ENCODE measurements at regions of chr4 and their contacts with region 1.

Region 1: DNA sequence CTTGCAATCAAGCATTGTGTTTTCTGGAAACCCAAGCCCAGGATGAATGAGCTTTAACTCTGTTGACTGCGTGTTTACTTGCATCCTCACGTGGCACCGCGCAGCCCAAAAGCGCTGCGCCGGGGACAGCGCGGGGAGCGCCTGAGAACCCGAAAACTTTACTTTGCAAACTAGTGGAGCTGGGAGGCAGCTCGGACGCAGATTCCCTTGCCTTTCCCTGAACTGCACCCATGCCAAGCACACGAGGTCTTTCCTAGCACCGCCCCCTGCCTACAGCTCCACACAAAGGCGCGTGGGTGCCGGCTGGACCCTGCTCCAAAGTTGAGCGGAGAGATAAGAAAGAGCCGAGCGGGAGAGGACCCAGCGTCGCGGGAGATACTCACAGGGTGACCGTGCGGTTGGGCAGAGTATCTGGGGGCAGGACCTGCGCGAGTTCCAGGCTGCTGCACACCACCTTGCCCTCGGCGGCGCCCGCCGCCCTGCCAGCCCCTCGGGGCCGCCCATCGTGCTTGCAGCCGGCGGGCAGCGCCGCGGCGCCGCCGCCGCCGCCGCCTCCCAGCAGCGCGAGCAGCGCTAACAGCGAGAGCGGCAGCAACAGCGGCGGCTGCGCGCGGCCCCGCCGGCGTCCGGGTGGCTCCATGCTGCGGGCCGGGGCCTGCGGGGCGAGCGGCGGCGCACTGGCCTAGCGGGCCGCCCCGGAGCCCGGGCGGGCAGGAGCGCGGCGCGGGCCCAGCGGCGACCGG is 550 bp downstream of the ADGRA3 start:
- DNase-seq: peak; percentile 32 to 33
- ATAC-seq: peak; percentile 71 to 83 (median 74)
- H3K4me3 ChIP-seq: peak overlapping the region; percentile 48
- H3K4me3 Mint-ChIP-seq: peak overlapping the region; percentile 99
- H3K27ac ChIP-seq: no peak overlapping the region
- H3K27ac Mint-ChIP-seq: peak overlapping the region; percentile 58 to 85
- H3K4me1 ChIP-seq: peaks cover 10% of the 10 kb centered on the region
- H3K4me1 Mint-ChIP-seq: peaks cover 26 to 29% of the 10 kb centered on the region in 2 donors
- H3K27me3 ChIP-seq: peaks cover 2% of the 10 kb centered on the region
- H3K27me3 Mint-ChIP-seq: peaks cover 0 to 6% of the 10 kb centered on the region in 2 donors
- CTCF ChIP-seq: no peak

Region 2: DNA sequence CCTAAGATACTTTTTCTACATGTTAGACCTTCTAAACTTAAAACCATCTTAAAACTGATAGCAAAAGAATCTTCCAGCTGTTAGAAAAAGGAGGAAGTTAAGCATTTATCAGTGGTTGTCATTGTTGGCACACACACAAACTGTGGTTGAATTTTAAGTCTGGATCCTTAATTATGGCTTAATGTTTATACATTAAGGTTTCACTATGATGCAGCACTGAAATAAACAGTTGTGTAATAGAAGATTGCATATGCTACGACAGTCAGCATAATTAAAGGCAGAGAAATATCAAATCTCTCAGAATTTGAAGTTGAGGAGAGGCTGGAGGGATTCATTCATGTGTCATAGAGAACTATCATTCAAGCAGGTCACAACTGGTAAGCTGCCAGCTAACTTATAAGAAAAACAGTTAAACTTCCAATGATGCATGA is 31.8 kb before region 1 on chr4:
- intact Hi-C with region 1: loop called (anchors 5 kb)
- DNase-seq: no peak
- ATAC-seq: peak; percentile 22 to 68 (median 35)
- H3K4me3 ChIP-seq: no peak overlapping the region
- H3K4me3 Mint-ChIP-seq: peak overlapping the region; percentile 71
- H3K27ac ChIP-seq: no peak overlapping the region
- H3K27ac Mint-ChIP-seq: peak overlapping the region; percentile 72 to 74
- H3K4me1 ChIP-seq: peaks cover 14% of the 10 kb centered on the region
- H3K4me1 Mint-ChIP-seq: peaks cover 54 to 61% of the 10 kb centered on the region in 2 donors
- H3K27me3 ChIP-seq: no peaks in the 10 kb centered on the region
- H3K27me3 Mint-ChIP-seq: no peaks in the 10 kb centered on the region
- CTCF ChIP-seq: no peak

Region 3: DNA sequence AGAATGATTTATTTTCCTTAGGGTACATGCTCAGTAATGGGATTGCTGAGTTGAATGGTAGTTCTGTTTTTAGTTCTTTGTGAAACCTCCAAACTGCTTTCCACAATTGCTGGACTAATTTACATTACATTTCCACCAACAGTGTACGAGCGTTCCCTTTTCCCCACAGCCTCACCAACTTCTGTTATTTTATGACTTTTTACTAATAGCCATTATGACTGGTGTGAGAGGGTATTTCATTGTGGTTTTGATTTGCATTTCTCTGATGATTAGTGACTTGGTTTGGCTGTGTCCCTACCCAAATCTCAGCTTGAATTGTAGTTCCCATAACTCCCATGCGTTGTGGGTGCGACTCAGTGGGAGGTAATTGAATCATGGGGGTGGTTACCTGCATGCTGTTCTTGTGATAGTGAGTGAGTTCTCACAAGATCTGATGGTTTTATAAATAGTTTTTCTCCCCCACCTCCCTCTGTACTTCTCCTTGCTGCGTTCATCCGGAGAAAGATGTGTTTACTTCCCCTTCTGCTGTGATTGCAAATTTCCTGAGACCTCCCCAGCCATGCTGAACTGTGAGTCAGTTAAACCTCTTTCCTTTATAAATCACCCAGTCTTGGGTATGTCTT is 272.5 kb after region 1 on chr4:
- intact Hi-C with region 1: no loop called
- DNase-seq: no peak
- ATAC-seq: no peak
- H3K4me3 ChIP-seq: no peak overlapping the region
- H3K4me3 Mint-ChIP-seq: no peak overlapping the region
- H3K27ac ChIP-seq: no peak overlapping the region
- H3K27ac Mint-ChIP-seq: no peak overlapping the region
- H3K4me1 ChIP-seq: no peaks in the 10 kb centered on the region
- H3K4me1 Mint-ChIP-seq: no peaks in the 10 kb centered on the region
- H3K27me3 ChIP-seq: no peaks in the 10 kb centered on the region
- H3K27me3 Mint-ChIP-seq: no peaks in the 10 kb centered on the region
- CTCF ChIP-seq: no peak

Region 4: DNA sequence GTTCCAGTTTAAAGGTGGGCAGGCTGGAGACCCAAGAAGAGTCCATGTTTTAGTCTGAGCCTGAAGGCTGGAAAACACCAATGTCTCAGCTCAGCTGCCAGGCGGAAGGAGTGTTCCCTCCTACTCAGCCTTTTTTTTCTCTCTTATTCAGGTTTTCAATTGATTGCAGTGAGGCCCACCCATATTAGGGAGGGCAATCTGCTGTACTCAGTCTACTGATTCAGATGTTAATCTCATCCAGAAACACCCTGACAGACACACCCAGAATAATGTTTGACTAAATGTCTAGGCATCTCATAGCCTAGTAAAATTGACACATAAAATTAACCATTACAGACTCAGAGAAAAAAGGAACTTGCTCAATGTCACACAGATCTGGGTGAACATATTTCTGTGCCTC is 524.5 kb after region 1 on chr4:
- intact Hi-C with region 1: no loop called
- DNase-seq: no peak
- ATAC-seq: no peak
- H3K4me3 ChIP-seq: no peak overlapping the region
- H3K4me3 Mint-ChIP-seq: no peak overlapping the region
- H3K27ac ChIP-seq: no peak overlapping the region
- H3K27ac Mint-ChIP-seq: no peak overlapping the region
- H3K4me1 ChIP-seq: no peaks in the 10 kb centered on the region
- H3K4me1 Mint-ChIP-seq: no peaks in the 10 kb centered on the region
- H3K27me3 ChIP-seq: no peaks in the 10 kb centered on the region
- H3K27me3 Mint-ChIP-seq: no peaks in the 10 kb centered on the region
- CTCF ChIP-seq: no peak